ENCODE measurements at regions of chr12 and their contacts with region 1.

Region 1: DNA sequence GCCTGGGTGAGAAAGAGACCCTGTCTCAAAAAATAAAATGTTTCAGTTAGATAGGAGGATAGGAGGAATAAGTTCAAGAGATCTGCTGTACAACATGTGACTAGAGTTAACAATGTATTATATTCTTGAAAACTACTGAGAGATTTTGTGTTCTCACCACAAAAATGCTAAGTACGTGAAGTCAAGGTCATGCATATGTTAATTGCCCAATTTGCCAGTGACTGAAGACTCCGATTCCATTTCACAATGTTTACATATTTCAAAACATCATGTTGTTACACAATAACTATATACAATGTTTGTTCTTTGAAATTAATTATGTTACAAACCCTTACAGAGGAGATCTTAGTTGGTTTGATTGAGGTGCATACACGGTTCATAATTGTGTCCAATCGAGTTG is 52.1 kb downstream of the SLC15A4 start:
- DNase-seq: no peak
- H3K4me3 ChIP-seq: no peak overlapping the region
- H3K27me3 ChIP-seq: no peaks in the 10 kb centered on the region
- CTCF ChIP-seq: no peak

Region 2: DNA sequence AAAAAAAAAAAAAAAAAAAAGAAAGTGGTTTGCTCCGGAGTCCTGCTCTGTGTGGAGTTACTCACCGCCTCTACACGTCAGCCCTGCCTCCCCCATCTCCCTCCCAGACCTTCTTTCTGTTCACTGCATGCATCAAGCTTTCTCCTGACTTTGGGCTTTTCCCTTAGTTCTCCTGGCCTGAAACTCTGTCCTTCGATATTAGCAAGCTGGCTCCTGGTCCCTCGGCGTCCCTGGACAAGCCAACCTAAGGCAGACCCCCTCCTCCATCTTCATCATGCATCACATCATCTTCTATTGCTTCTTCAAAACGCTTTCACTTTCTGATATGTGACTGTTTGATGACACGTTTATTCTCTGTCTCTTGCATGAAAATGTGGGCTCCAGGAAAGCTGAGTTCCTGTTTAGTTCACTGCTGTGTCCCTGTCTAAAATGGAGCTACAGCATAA is 11.5 kb after region 1 on chr12:
- CTCF ChIA-PET with region 1: interaction called, 20 read pairs
- POLR2A ChIA-PET with region 1: no interaction called
- DNase-seq: no peak
- H3K4me3 ChIP-seq: no peak overlapping the region
- H3K27me3 ChIP-seq: no peaks in the 10 kb centered on the region
- CTCF ChIP-seq: no peak

Measured in BJ (cell line).